ENCODE measurements at regions of chr6 and their contacts with region 1.

Region 1: GRCh38 chr6:45922728-45923351 is 92.8 kb downstream of the CLIC5 start:
- DNase-seq: no peak
- ATAC-seq: peak; percentile 46; the same call in 1 of the 3 replicates
- H3K4me3 ChIP-seq: no peak overlapping the region
- H3K27ac ChIP-seq: no peak overlapping the region
- H3K4me1 ChIP-seq: no peaks in the 10 kb centered on the region
- H3K27me3 ChIP-seq: no peaks in the 10 kb centered on the region; a peak in 1 of 5 replicates
- CTCF ChIP-seq: peak; percentile 70
- EP300 ChIP-seq: no peak
- POLR2A ChIP-seq: no peak
- RAD21 ChIP-seq: peak; percentile 29; the same call in 1 of the 2 replicates

Region 2: DNA sequence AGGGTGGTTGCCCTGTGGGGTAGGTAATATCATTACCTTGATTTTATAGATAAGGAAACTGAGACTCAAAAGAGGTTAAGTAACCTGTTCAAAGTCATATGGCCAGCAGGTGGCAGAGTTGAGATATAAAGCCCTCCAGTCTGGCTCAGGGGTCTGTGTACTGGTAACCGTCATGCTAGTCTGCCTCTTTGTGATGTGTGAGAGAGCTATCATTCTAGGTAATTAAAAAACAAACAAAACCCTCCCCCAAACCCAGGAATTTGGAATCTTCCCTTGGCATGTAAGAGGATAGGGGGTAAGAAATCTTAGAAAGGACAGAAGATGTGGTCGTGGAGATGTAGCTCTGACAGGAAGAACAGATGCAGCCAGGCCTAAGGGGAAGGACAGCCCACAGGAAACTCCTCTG is 1329.3 kb before region 1 on chr6:
- CTCF ChIA-PET with region 1: interaction called, 4 read pairs
- POLR2A ChIA-PET with region 1: no interaction called
- in situ Hi-C with region 1: no loop called
- intact Hi-C with region 1: loop called (anchors 5 kb)
- DNase-seq: peak; percentile 68
- ATAC-seq: peak; percentile 84
- H3K4me3 ChIP-seq: no peak overlapping the region
- H3K27ac ChIP-seq: no peak overlapping the region
- H3K4me1 ChIP-seq: no peaks in the 10 kb centered on the region
- H3K27me3 ChIP-seq: peaks cover 0 to 2% of the 10 kb centered on the region in 2 experiments; a peak in 2 of 5 replicates
- CTCF ChIP-seq: peak; percentile 66
- EP300 ChIP-seq: no peak
- POLR2A ChIP-seq: no peak
- RAD21 ChIP-seq: no peak

Region 3: DNA sequence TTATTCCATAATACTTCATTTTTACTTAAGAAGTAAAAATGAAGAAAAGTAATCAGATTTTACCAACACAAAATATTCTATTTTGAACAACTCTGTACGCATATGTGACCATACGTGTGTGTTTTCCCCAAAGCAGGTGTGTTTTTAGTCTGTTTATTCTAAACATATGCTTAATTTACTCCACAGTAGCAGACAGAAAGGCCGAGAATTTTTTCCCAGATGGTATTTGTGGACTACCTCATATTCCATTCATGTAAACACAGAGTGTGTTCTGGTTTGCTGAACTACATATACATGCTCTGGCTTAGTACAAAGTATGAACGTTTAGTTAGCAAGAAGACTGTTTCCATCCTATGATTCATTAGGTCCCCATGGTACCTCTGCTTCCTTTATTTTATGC is 828.0 kb before region 1 on chr6:
- CTCF ChIA-PET with region 1: no interaction called
- POLR2A ChIA-PET with region 1: no interaction called
- in situ Hi-C with region 1: no loop called
- intact Hi-C with region 1: loop called (anchors 5 kb)
- DNase-seq: no peak
- ATAC-seq: no peak
- H3K4me3 ChIP-seq: no peak overlapping the region
- H3K27ac ChIP-seq: no peak overlapping the region
- H3K4me1 ChIP-seq: no peaks in the 10 kb centered on the region
- H3K27me3 ChIP-seq: no peaks in the 10 kb centered on the region
- CTCF ChIP-seq: no peak
- EP300 ChIP-seq: no peak
- POLR2A ChIP-seq: no peak
- RAD21 ChIP-seq: no peak

Region 4: DNA sequence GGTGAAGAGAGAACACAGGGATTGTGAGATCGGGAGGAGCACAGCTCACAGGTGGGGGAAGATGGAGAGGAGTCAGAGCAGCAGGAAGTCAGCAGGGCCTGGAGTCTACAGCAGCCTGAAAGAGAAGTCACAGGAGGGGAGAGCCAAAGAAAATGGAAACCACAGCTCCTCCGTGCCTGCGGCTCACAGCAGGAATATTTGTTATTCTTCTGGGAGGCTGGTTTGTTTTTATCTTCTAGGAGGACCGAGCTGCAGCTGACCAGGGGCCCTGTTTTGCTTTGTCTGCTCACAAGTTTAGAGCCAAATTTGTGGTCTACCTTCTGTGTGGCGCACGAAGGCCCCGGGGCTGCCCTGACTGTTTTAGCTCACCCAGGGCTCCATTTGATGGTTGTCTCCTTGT is 11.0 kb after region 1 on chr6:
- CTCF ChIA-PET with region 1: no interaction called
- POLR2A ChIA-PET with region 1: no interaction called
- in situ Hi-C with region 1: no loop called
- intact Hi-C with region 1: no loop called
- DNase-seq: no peak
- ATAC-seq: no peak
- H3K4me3 ChIP-seq: no peak overlapping the region
- H3K27ac ChIP-seq: no peak overlapping the region
- H3K4me1 ChIP-seq: no peaks in the 10 kb centered on the region
- H3K27me3 ChIP-seq: peaks cover 5 to 7% of the 10 kb centered on the region in 2 experiments; a peak in 3 of 5 replicates
- CTCF ChIP-seq: no peak
- EP300 ChIP-seq: no peak
- POLR2A ChIP-seq: no peak
- RAD21 ChIP-seq: no peak